ENCODE measurements at regions of chr5 and their contacts with region 1.

Region 1: DNA sequence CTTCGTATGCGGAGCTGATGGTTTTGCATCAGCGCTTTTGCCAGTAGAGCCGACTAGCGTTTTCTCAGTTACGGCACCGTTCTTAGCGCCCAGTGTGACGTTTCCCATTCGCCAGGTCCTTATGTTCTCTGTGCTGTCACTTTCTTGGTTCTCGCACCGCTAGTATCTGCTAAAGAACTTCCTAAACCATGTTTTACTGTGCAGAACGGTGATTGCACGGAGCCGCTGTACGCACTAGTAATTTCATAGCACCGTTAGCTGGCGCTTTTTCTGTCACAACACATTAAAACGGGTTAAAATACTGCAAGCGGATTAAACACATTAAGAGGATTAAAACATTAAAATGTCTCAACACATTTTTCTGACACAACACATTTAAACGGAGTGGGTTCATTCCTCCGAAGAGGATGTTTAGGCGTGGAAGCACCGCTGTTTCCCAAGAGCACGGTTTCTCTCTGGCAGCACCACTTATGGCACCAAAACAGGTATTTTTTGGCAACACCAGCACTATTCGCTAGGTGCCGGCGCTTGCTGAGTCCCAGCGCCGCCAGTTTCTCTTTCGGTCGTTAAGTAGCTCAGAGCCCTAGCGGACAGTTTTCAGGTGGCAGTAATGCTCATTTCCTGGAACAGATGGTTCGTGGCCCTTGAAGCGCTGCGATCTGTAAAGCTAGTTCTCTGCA is 20.4 kb downstream of the ANXA2R start:
- DNase-seq: peak; percentile 91
- H3K4me3 Mint-ChIP-seq: peak overlapping the region; percentile 97
- H3K27ac Mint-ChIP-seq: peak overlapping the region; percentile 98
- H3K4me1 Mint-ChIP-seq: peaks cover 32% of the 10 kb centered on the region
- H3K27me3 Mint-ChIP-seq: no peaks in the 10 kb centered on the region

Region 2: DNA sequence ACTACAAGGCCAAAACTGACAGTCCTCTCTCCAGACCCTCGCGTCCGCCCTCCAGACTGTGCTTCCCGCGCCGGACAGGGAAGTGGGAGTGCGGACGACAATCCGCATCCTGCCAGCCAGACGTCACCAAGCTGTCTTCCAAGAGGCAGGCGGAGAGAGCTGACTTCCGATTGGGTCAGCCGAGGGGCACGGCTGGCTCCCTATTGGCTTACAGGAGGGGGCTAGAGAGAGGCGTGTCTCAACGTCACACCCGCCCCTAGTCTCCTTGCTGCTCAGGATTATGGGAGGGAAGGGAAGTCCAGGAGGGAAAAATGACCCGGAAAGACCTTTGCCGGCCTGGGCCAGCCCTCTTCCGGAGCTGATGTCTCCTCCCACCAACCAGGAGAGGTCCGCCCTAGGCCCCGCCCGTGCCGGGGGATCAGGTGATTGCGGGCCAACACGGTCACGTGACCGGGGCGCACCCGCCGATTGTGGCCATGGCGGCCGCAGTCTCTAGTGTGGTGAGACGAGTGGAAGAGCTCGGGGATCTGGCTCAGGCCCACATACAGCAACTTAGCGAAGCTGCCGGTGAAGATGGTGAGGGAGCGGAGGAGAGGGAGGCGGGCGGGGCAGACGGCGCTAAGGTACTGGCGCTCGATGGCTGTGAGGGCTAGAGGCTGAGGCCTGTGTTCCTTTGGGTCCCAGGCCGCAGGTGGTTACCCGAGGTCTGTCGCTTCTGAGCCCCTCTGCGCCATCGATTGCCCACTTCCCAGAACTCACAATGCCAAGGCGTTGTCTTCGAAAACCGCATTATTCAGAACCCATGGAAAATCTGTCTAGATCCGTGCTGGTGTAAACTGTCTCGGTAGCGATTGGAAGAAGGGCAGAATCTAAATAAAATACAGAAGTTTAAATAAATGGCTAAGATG is 1115.6 kb before region 1 on chr5 and contains the start of gene RIMOC1:
- CTCF ChIA-PET with region 1: no interaction called
- POLR2A ChIA-PET with region 1: no interaction called
- intact Hi-C with region 1: loop called (anchors 5 kb)
- DNase-seq: peak; percentile 99
- H3K4me3 Mint-ChIP-seq: peak within 1 kb of the TSS; percentile 91
- H3K27ac Mint-ChIP-seq: peak within 1 kb of the TSS; percentile 93
- H3K4me1 Mint-ChIP-seq: peaks cover 37% of the 10 kb centered on the region
- H3K27me3 Mint-ChIP-seq: peaks cover 2% of the 10 kb centered on the region
- total RNA-seq, gene RIMOC1: 25.0 to 25.8 TPM

Region 3: DNA sequence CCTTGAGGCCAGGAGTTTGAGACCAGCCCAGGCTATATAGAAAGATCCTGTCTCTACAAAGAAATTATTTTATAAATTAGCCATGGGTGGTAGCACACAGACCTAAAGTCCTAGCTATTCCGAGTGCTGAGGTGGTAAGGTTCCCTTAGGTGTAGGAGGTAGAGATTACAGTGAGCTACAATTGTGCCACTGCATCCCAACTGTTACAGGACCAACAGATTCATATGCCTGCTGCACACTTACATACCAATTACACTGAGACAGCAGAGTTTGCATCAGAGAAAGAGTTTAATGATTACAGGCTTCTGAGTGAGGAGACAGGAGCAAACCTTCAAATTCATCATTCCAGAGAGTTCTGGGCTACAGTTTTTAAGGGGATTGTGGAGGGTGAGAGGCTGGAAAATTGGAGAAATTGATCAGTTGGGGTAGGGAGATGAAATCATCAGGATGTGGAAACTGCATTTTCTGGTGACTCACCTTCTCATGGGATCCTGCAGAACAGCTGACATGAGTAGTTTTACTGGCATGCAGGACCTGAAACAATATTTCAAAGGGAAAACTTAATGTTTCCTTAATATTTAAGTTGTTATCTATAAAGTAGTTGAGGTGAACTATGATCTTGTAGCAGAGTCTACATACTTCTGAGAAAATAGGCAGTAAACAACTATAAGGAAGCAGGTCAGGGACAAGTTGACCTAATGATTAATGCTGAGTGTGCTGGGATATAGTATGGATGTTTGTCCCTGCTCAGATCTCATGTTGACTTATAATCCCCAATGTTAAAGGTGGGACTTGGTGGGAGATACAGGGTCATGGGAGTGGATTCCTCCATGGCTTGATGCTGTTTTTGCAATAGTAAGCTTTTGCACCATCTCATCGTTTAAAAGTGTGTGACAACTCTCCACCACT is 34.4 kb before region 1 on chr5:
- CTCF ChIA-PET with region 1: interaction called, 11 read pairs
- POLR2A ChIA-PET with region 1: interaction called, 6 read pairs
- intact Hi-C with region 1: no loop called
- DNase-seq: no peak
- H3K4me3 Mint-ChIP-seq: no peak overlapping the region
- H3K27ac Mint-ChIP-seq: no peak overlapping the region
- H3K4me1 Mint-ChIP-seq: peaks cover 49% of the 10 kb centered on the region
- H3K27me3 Mint-ChIP-seq: no peaks in the 10 kb centered on the region

Region 4: DNA sequence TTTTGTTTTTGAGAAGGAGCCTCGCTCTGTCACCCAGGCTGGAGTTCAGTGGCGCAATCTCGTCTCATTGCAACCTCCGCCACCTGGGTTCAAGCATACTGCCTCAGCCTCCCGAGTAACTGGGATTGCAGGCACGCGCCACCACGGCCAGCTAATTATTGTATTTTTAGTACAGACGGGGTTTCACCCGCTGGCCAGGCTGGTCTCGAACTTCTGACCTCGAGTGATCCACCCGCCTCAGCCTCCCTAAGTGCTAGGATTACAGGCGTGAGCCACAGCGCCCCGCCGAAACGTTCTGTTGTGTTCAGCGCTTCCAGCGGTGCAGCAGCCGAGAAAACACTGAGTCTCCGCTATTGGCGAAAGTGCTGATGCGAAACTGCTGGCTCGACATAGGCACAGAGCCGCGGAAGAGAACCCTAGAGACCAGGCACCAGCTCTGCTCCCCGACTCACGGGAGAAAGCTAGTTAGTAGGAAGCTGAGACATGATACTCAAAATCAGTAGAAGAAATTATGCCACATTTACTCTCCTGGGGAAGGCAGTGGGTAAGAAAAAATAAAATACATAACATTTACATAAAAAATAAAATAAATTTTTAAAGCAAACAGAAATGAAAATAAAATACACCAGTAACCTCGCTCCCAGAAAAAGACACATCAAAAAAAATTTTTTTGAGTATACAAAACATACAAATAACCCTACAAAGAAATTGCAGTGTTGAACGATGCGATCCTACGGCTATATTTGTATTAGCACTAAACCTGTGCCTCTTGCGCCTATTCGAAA is 11.2 kb before region 1 on chr5:
- CTCF ChIA-PET with region 1: interaction called, 68 read pairs
- POLR2A ChIA-PET with region 1: interaction called, 83 read pairs
- intact Hi-C with region 1: loop called (anchors 1 kb)
- DNase-seq: peak; percentile 93
- H3K4me3 Mint-ChIP-seq: peak overlapping the region; percentile 81
- H3K27ac Mint-ChIP-seq: peak overlapping the region; percentile 88
- H3K4me1 Mint-ChIP-seq: peaks cover 26% of the 10 kb centered on the region
- H3K27me3 Mint-ChIP-seq: no peaks in the 10 kb centered on the region

Region 5: GRCh38 chr5:43040287-43041098 is 20.7 kb after region 1 on chr5 and contains the start of gene ANXA2R:
- CTCF ChIA-PET with region 1: interaction called, 72 read pairs
- POLR2A ChIA-PET with region 1: interaction called, 31 read pairs
- intact Hi-C with region 1: loop called (anchors 1 kb)
- DNase-seq: peak; percentile 97
- H3K4me3 Mint-ChIP-seq: peak within 1 kb of the TSS; percentile 94
- H3K27ac Mint-ChIP-seq: peak within 1 kb of the TSS; percentile 96
- H3K4me1 Mint-ChIP-seq: peaks cover 41% of the 10 kb centered on the region
- H3K27me3 Mint-ChIP-seq: no peaks in the 10 kb centered on the region
- total RNA-seq, gene ANXA2R: 2.8 to 3.8 TPM

Region 6: GRCh38 chr5:43592363-43592762 is 572.6 kb after region 1 on chr5:
- CTCF ChIA-PET with region 1: no interaction called
- POLR2A ChIA-PET with region 1: no interaction called
- intact Hi-C with region 1: no loop called
- DNase-seq: no peak
- H3K4me3 Mint-ChIP-seq: no peak overlapping the region
- H3K27ac Mint-ChIP-seq: no peak overlapping the region
- H3K4me1 Mint-ChIP-seq: no peaks in the 10 kb centered on the region
- H3K27me3 Mint-ChIP-seq: no peaks in the 10 kb centered on the region